ENCODE measurements at regions of chr12 and their contacts with region 1.

Region 1: DNA sequence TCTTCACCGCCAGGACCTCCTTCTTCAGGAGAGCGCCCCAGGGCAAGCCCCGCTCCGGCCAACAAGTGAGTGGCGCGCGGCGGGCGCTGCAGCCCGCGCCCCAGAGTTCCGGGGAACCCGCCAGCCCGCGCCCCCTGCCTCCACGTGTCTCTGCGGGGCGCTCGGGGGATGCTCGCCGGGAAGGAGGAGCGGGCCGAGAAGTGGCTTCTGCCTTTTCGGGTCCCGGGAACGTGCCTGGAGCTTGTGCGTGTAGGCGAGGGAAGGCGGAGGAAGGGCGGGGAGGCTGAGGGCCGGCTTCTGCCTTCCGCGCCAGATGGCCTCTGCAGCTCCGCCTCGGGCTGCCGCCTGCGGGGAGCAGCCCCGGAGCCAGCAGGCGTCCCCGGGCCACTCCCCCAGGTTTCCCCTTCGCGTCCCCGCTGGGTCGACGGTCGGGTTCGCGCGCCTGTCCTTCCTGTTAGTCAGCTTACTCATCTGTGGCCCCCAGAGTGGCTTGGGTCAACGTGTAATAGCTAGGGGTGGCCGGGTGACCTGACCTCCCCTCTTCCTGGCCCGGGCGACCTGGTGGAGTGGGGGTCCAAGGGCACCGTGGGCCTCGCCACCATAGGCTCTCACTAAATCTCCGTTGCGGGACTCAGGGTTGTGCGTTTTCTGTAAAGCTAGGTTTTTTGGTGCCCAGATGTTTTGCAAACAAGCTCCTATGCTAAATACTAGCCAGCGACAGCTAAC is 547 bp downstream of the RASSF3 start:
- DNase-seq: peak; percentile 67 to 69
- H3K4me3 ChIP-seq: peak overlapping the region; percentile 95
- H3K4me3 Mint-ChIP-seq: peak overlapping the region; percentile 80
- H3K27ac Mint-ChIP-seq: peak overlapping the region; percentile 39
- H3K4me1 ChIP-seq: peaks cover 5% of the 10 kb centered on the region; the same call in 1 of the 2 replicates
- H3K4me1 Mint-ChIP-seq: peaks cover 7% of the 10 kb centered on the region
- H3K27me3 ChIP-seq: no peaks in the 10 kb centered on the region
- H3K27me3 Mint-ChIP-seq: no peaks in the 10 kb centered on the region
- CTCF ChIP-seq: no peak

Region 2: DNA sequence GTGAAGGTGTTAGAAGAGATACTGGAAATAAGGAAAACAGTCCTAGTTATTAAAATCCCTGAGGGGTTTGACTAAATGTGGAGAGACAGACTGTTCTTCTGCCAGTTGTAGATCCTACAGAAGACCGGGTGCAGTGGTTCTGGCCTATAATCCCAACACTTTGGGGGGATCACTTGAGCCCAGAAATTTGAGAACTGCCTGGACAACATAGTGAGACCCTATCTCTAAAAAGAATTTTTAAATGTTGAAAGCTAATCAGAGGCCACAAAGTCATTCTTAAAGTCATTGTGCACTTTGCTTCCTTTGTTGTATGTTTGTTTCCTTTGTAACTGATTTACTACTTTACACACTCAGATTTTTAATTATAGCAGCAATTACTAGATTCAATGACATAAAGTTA is 61.7 kb before region 1 on chr12:
- CTCF ChIA-PET with region 1: no interaction called
- POLR2A ChIA-PET with region 1: no interaction called
- intact Hi-C with region 1: loop called (anchors 1 kb)
- DNase-seq: no peak
- H3K4me3 ChIP-seq: no peak overlapping the region
- H3K4me3 Mint-ChIP-seq: no peak overlapping the region
- H3K27ac Mint-ChIP-seq: no peak overlapping the region
- H3K4me1 ChIP-seq: no peaks in the 10 kb centered on the region
- H3K4me1 Mint-ChIP-seq: no peaks in the 10 kb centered on the region
- H3K27me3 ChIP-seq: no peaks in the 10 kb centered on the region
- H3K27me3 Mint-ChIP-seq: no peaks in the 10 kb centered on the region
- CTCF ChIP-seq: no peak

Region 3: GRCh38 chr12:64571411-64571810 is 39.4 kb before region 1 on chr12:
- CTCF ChIA-PET with region 1: no interaction called
- POLR2A ChIA-PET with region 1: no interaction called
- intact Hi-C with region 1: no loop called
- DNase-seq: no peak
- H3K4me3 ChIP-seq: no peak overlapping the region
- H3K4me3 Mint-ChIP-seq: no peak overlapping the region
- H3K27ac Mint-ChIP-seq: no peak overlapping the region
- H3K4me1 ChIP-seq: no peaks in the 10 kb centered on the region
- H3K4me1 Mint-ChIP-seq: no peaks in the 10 kb centered on the region
- H3K27me3 ChIP-seq: no peaks in the 10 kb centered on the region
- H3K27me3 Mint-ChIP-seq: no peaks in the 10 kb centered on the region
- CTCF ChIP-seq: no peak

Region 4: DNA sequence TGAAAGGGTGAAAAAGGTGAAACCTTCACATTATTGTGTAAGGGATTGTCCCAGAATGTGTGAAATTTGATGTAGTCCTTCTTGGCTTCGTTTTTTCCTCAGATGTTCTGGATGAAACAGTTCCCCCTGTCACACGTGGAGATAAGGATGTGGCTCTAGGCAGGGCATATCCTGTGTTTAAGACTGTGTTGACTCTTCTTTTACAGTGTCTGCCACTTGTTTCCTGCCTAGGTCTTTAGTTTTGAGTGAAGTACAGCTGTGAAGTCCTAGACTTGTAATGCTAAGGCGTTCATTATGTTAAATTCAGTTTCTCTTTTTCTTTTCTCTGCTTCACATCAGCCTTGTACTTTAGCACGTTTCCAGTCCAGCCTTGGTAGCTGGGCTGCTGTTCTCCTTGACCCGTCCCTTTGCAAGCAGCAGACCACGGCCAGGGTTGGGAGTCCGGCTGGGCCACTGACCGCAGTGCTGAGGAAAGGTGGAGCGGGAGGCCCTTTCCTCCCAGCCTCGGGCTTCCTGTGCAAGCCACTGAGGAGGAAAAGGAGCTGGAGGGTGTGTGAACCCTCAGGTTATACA is 58.5 kb after region 1 on chr12:
- CTCF ChIA-PET with region 1: no interaction called
- POLR2A ChIA-PET with region 1: no interaction called
- intact Hi-C with region 1: loop called (anchors 2 kb)
- DNase-seq: peak in 1 of 2 experiments; percentile 45
- H3K4me3 ChIP-seq: no peak overlapping the region
- H3K4me3 Mint-ChIP-seq: peak overlapping the region; percentile 27
- H3K27ac Mint-ChIP-seq: peak overlapping the region; percentile 57
- H3K4me1 ChIP-seq: peaks cover 91% of the 10 kb centered on the region
- H3K4me1 Mint-ChIP-seq: peaks cover 59% of the 10 kb centered on the region
- H3K27me3 ChIP-seq: no peaks in the 10 kb centered on the region
- H3K27me3 Mint-ChIP-seq: no peaks in the 10 kb centered on the region
- CTCF ChIP-seq: no peak